ENCODE measurements at regions of chr2 and their contacts with region 1.

Region 1: GRCh38 chr2:27703638-27704341 is 40.1 kb downstream of the SLC4A1AP start:
- DNase-seq: peak; percentile 71
- ATAC-seq: peak; percentile 73
- H3K4me3 ChIP-seq: no peak overlapping the region
- H3K27ac ChIP-seq: no peak overlapping the region
- H3K4me1 ChIP-seq: peaks cover 17 to 42% of the 10 kb centered on the region in 2 experiments
- H3K27me3 ChIP-seq: no peaks in the 10 kb centered on the region
- CTCF ChIP-seq: peak; percentile 85 to 95 (median 90)
- POLR2A ChIP-seq: no peak
- RAD21 ChIP-seq: peak; percentile 98

Region 2: GRCh38 chr2:27453967-27454366 is 249.8 kb before region 1 on chr2:
- CTCF ChIA-PET with region 1: no interaction called
- POLR2A ChIA-PET with region 1: no interaction called
- RAD21 ChIA-PET with region 1: no interaction called
- intact Hi-C with region 1: no loop called
- DNase-seq: no peak
- ATAC-seq: peak; percentile 44; the same call in 1 of the 2 replicates
- H3K4me3 ChIP-seq: no peak overlapping the region
- H3K27ac ChIP-seq: no peak overlapping the region
- H3K4me1 ChIP-seq: no peaks in the 10 kb centered on the region
- H3K27me3 ChIP-seq: no peaks in the 10 kb centered on the region
- CTCF ChIP-seq: peak in 2 of 3 experiments; percentile 10 to 18; a peak in 1 of 6 replicates
- POLR2A ChIP-seq: no peak
- RAD21 ChIP-seq: peak; percentile 24; the same call in 1 of the 2 replicates

Region 3: DNA sequence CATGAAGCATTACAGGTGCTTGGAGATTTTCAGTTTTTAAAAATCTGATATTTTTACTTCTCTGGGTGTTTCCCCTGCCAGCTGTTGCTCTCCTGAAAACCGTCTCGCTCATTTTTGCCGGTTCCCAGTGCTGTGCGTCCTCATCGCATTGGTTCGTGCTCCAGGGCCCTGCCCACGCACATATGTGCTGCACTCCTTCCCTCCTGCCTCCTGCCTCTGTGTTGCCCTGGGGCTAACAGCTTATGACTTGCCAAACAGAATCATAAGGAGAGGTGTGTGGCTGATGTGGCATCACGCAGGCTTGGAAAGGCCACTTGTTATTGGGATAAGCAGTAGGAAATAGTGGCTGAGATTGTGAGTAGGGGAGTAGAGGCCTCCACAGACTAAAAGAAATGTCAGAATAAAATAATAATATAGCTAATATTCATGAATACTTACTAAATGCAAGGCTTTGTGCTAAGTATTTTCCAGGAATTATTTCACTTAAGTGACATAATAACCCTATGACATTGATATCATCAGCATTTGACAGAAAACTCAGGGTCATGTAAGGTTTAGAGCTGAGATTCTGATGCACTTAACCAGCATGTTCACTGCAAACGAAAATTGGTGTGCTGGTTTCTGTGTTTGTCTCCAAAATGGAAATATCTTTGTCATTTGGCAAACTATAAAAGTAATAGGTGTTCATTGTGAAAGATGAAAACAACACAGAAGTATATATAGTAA is 13.4 kb after region 1 on chr2:
- CTCF ChIA-PET with region 1: interaction called, 5 read pairs
- POLR2A ChIA-PET with region 1: interaction called, 14 read pairs
- RAD21 ChIA-PET with region 1: no interaction called
- intact Hi-C with region 1: no loop called
- DNase-seq: no peak
- ATAC-seq: peak; percentile 39
- H3K4me3 ChIP-seq: peak overlapping the region in 1 of 2 experiments; percentile 32; a peak in 3 of 4 replicates
- H3K27ac ChIP-seq: no peak overlapping the region
- H3K4me1 ChIP-seq: peaks cover 35 to 66% of the 10 kb centered on the region in 2 experiments
- H3K27me3 ChIP-seq: no peaks in the 10 kb centered on the region
- CTCF ChIP-seq: no peak
- POLR2A ChIP-seq: no peak
- RAD21 ChIP-seq: no peak

Region 4: DNA sequence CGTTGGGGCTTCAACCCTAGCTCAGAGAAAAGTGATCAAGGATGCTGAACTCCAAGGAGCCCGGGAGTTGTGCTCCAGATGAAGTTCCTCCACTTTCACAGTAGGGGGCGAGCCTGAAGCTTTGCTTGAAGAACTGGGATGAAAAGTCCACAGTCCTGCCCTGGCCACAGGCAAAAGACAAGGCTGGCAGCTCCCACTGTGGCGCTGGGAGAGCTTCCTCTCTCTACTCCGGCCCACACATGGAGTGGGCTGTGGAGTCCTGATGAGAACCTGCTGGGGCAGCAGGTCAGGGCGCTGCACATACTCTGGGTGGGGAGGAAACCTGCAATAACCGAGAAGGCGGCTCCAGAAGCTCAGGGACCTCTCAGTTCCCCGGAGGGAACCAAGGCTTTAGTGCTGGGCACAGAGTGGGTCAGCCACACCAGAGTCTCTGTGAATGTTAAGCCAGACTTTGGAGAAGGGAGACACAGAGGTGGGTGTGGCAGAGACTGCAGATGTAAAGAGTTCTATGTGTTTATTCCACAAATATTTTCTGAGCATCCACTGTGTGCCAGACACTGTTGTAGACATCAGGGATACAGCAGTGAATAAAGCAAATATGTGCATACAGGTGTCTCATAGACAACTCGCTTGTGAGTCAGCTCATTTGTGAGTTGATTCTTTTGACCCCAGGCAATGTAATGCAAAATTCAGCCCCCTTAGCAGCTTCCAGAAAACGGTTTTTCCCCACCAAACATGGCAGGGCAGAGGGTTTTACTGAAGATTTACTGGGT is 19.8 kb after region 1 on chr2:
- CTCF ChIA-PET with region 1: interaction called, 12 read pairs
- POLR2A ChIA-PET with region 1: interaction called, 5 read pairs
- RAD21 ChIA-PET with region 1: interaction called in 1 of 2 experiments, 4 read pairs
- intact Hi-C with region 1: no loop called
- DNase-seq: peak; percentile 62
- ATAC-seq: peak; percentile 59
- H3K4me3 ChIP-seq: no peak overlapping the region
- H3K27ac ChIP-seq: no peak overlapping the region
- H3K4me1 ChIP-seq: peaks cover 29 to 60% of the 10 kb centered on the region in 2 experiments
- H3K27me3 ChIP-seq: no peaks in the 10 kb centered on the region
- CTCF ChIP-seq: peak in 2 of 3 experiments; percentile 82 to 88; a peak in 4 of 6 replicates
- POLR2A ChIP-seq: no peak
- RAD21 ChIP-seq: no peak

Region 5: GRCh38 chr2:27796791-27797765 is 93.3 kb after region 1 on chr2:
- CTCF ChIA-PET with region 1: no interaction called
- POLR2A ChIA-PET with region 1: no interaction called
- RAD21 ChIA-PET with region 1: no interaction called
- intact Hi-C with region 1: no loop called
- DNase-seq: no peak
- ATAC-seq: no peak
- H3K4me3 ChIP-seq: no peak overlapping the region
- H3K27ac ChIP-seq: no peak overlapping the region
- H3K4me1 ChIP-seq: peaks cover 20 to 70% of the 10 kb centered on the region in 2 experiments
- H3K27me3 ChIP-seq: no peaks in the 10 kb centered on the region
- CTCF ChIP-seq: no peak
- POLR2A ChIP-seq: no peak
- RAD21 ChIP-seq: no peak

Region 6: DNA sequence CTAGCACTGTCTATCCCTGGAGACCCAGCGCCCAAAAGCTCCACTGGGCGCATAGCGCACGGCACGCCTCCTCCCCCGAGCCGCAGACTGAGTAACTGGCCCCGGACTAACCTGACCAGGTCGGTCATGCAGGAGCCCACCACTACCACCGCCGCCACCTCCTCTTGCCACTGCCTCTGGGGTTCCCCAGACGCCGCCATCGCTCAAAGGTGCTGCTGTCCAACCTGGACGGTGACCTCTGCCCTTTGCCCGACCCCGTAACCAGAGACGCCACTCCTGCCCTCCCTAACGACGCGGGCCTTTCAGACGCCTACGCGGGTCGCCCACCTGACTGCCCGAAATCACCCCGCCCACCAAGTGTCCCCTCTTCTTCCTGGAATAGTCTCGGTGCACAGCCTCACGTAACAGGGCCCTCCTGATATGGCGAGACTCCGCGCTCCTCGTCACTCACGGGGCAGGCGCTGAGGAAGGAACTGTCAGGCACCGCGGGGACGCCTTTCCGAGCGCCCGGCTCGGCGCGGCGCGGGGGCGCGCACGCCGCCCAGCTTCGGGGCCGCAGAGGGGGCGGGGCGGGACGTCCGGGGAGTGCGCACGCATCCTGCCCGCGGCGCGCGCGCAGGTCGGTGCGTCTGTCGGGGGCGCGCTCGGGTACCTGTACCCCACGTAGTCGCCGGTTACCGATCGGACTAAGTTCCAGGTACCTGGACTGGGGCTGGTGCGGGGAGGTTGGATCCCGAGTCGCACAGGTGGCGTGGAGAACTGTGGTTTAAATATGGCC is 186.5 kb after region 1 on chr2 and contains the starts of genes BABAM2 and RBKS:
- CTCF ChIA-PET with region 1: no interaction called
- POLR2A ChIA-PET with region 1: no interaction called
- RAD21 ChIA-PET with region 1: interaction called in 1 of 2 experiments, 4 read pairs
- intact Hi-C with region 1: loop called (anchors 5 kb)
- DNase-seq: peak; percentile 66
- ATAC-seq: peak; percentile 89
- H3K4me3 ChIP-seq: peak within 1 kb of the TSS; percentile 66 to 78
- H3K27ac ChIP-seq: peak within 1 kb of the TSS; percentile 98
- H3K4me1 ChIP-seq: peaks cover 6 to 28% of the 10 kb centered on the region in 2 experiments; a peak in 3 of 4 replicates
- H3K27me3 ChIP-seq: no peaks in the 10 kb centered on the region
- CTCF ChIP-seq: no peak
- POLR2A ChIP-seq: no peak
- RAD21 ChIP-seq: peak; percentile 23; the same call in 1 of the 2 replicates
- total RNA-seq, gene BABAM2: 23.8 TPM
- total RNA-seq, gene RBKS: 2.4 TPM

Region 7: DNA sequence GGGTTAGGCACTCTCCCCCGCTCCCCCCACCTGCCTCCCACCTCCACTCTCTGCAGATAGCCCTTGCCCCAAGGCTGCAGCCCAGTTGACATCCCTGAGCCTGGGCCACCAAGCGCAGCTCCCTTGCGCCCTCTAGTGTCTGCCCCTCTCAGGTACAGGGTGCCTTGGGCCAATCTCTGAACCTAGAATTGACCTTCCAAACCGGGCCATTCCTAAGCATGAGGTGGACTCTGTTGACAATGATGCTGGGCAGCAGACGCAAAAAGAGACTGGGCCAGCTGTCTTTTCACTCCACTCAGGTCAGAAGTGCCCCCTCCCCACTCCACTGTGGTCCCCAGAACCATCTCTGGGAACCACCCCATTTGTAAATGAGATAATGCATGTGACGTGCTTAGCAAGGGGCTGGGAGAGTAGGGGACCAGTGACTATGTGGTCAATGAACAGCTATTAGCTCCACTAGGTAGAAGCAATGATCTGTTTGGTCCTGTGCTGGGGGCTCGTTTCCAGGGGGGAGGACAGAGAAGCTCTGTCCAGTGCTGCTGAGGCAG is 748.8 kb after region 1 on chr2:
- CTCF ChIA-PET with region 1: interaction called, 6 read pairs
- POLR2A ChIA-PET with region 1: no interaction called
- RAD21 ChIA-PET with region 1: no interaction called
- intact Hi-C with region 1: loop called (anchors 1 kb)
- DNase-seq: peak; percentile 32
- ATAC-seq: peak; percentile 91
- H3K4me3 ChIP-seq: no peak overlapping the region
- H3K27ac ChIP-seq: no peak overlapping the region
- H3K4me1 ChIP-seq: peaks cover 8 to 31% of the 10 kb centered on the region in 2 experiments; a peak in 3 of 4 replicates
- H3K27me3 ChIP-seq: no peaks in the 10 kb centered on the region
- CTCF ChIP-seq: peak; percentile 85 to 98 (median 97)
- POLR2A ChIP-seq: no peak
- RAD21 ChIP-seq: peak; percentile 97